Caco-2 (cell line): ENCODE measurements at regions of chr5 and their contacts with region 1.

Region 1: DNA sequence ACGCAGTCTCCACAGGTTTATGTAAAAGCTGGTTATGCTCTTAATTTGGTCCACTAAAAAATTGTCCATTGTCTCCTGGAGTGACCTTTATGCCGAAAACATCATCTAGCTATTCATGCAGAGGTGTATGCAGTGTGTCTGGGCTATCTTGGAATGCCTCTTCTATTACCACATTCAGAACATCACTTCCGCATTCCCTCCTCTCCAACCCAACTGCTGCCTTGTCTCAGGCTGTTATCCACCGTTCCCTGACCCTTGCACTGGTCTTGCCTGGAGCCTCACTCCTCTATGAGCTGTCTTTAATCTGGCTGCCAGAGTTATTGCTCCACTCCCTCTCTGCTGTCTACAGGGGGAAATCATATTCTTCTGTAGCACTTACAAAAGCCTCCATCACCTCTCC is 214.1 kb upstream of the ANKRD55 start:
- DNase-seq: peak; percentile 92 to 97
- H3K4me3 ChIP-seq: no peak overlapping the region
- H3K4me3 Mint-ChIP-seq: peak overlapping the region; percentile 28
- H3K27ac Mint-ChIP-seq: peak overlapping the region; percentile 81
- H3K4me1 ChIP-seq: peaks cover 52% of the 10 kb centered on the region
- H3K4me1 Mint-ChIP-seq: peaks cover 23% of the 10 kb centered on the region
- H3K27me3 ChIP-seq: no peaks in the 10 kb centered on the region
- H3K27me3 Mint-ChIP-seq: no peaks in the 10 kb centered on the region
- CTCF ChIP-seq: no peak

Region 2: GRCh38 chr5:56279979-56280378 is 167.3 kb before region 1 on chr5:
- CTCF ChIA-PET with region 1: no interaction called
- POLR2A ChIA-PET with region 1: no interaction called
- intact Hi-C with region 1: no loop called
- DNase-seq: peak in 1 of 2 experiments; percentile 34
- H3K4me3 ChIP-seq: no peak overlapping the region
- H3K4me3 Mint-ChIP-seq: no peak overlapping the region
- H3K27ac Mint-ChIP-seq: no peak overlapping the region
- H3K4me1 ChIP-seq: peaks cover 53% of the 10 kb centered on the region
- H3K4me1 Mint-ChIP-seq: peaks cover 18% of the 10 kb centered on the region
- H3K27me3 ChIP-seq: no peaks in the 10 kb centered on the region
- H3K27me3 Mint-ChIP-seq: no peaks in the 10 kb centered on the region
- CTCF ChIP-seq: no peak

Region 3: GRCh38 chr5:56310711-56311204 is 136.5 kb before region 1 on chr5:
- CTCF ChIA-PET with region 1: interaction called, 6 read pairs
- POLR2A ChIA-PET with region 1: no interaction called
- intact Hi-C with region 1: loop called (anchors 2 kb)
- DNase-seq: no peak
- H3K4me3 ChIP-seq: no peak overlapping the region
- H3K4me3 Mint-ChIP-seq: no peak overlapping the region
- H3K27ac Mint-ChIP-seq: peak overlapping the region; percentile 34
- H3K4me1 ChIP-seq: peaks cover 71% of the 10 kb centered on the region
- H3K4me1 Mint-ChIP-seq: peaks cover 55% of the 10 kb centered on the region
- H3K27me3 ChIP-seq: no peaks in the 10 kb centered on the region
- H3K27me3 Mint-ChIP-seq: no peaks in the 10 kb centered on the region
- CTCF ChIP-seq: no peak

Region 4: GRCh38 chr5:56415356-56415765 is 31.9 kb before region 1 on chr5:
- CTCF ChIA-PET with region 1: interaction called, 3 read pairs
- POLR2A ChIA-PET with region 1: no interaction called
- intact Hi-C with region 1: loop called (anchors 1 kb)
- DNase-seq: peak; percentile 82 to 90
- H3K4me3 ChIP-seq: no peak overlapping the region
- H3K4me3 Mint-ChIP-seq: peak overlapping the region; percentile 64
- H3K27ac Mint-ChIP-seq: peak overlapping the region; percentile 95
- H3K4me1 ChIP-seq: peaks cover 73% of the 10 kb centered on the region
- H3K4me1 Mint-ChIP-seq: peaks cover 45% of the 10 kb centered on the region
- H3K27me3 ChIP-seq: no peaks in the 10 kb centered on the region
- H3K27me3 Mint-ChIP-seq: no peaks in the 10 kb centered on the region
- CTCF ChIP-seq: no peak

Region 5: GRCh38 chr5:56475689-56476486 is 28.7 kb after region 1 on chr5:
- CTCF ChIA-PET with region 1: interaction called, 6 read pairs
- POLR2A ChIA-PET with region 1: interaction called, 8 read pairs
- intact Hi-C with region 1: loop called (anchors 1 kb)
- DNase-seq: no peak
- H3K4me3 ChIP-seq: no peak overlapping the region
- H3K4me3 Mint-ChIP-seq: peak overlapping the region; percentile 8
- H3K27ac Mint-ChIP-seq: peak overlapping the region; percentile 45
- H3K4me1 ChIP-seq: peaks cover 68% of the 10 kb centered on the region
- H3K4me1 Mint-ChIP-seq: peaks cover 36% of the 10 kb centered on the region
- H3K27me3 ChIP-seq: no peaks in the 10 kb centered on the region
- H3K27me3 Mint-ChIP-seq: no peaks in the 10 kb centered on the region
- CTCF ChIP-seq: no peak

Region 6: GRCh38 chr5:56481428-56482357 is 34.5 kb after region 1 on chr5:
- CTCF ChIA-PET with region 1: interaction called, 6 read pairs
- POLR2A ChIA-PET with region 1: interaction called, 8 read pairs
- intact Hi-C with region 1: loop called (anchors 1 kb)
- DNase-seq: peak; percentile 62 to 66
- H3K4me3 ChIP-seq: peak overlapping the region; percentile 56
- H3K4me3 Mint-ChIP-seq: peak overlapping the region; percentile 69
- H3K27ac Mint-ChIP-seq: peak overlapping the region; percentile 71
- H3K4me1 ChIP-seq: peaks cover 40% of the 10 kb centered on the region
- H3K4me1 Mint-ChIP-seq: peaks cover 24% of the 10 kb centered on the region
- H3K27me3 ChIP-seq: no peaks in the 10 kb centered on the region
- H3K27me3 Mint-ChIP-seq: no peaks in the 10 kb centered on the region
- CTCF ChIP-seq: peak in 1 of 2 experiments; percentile 55

Region 7: DNA sequence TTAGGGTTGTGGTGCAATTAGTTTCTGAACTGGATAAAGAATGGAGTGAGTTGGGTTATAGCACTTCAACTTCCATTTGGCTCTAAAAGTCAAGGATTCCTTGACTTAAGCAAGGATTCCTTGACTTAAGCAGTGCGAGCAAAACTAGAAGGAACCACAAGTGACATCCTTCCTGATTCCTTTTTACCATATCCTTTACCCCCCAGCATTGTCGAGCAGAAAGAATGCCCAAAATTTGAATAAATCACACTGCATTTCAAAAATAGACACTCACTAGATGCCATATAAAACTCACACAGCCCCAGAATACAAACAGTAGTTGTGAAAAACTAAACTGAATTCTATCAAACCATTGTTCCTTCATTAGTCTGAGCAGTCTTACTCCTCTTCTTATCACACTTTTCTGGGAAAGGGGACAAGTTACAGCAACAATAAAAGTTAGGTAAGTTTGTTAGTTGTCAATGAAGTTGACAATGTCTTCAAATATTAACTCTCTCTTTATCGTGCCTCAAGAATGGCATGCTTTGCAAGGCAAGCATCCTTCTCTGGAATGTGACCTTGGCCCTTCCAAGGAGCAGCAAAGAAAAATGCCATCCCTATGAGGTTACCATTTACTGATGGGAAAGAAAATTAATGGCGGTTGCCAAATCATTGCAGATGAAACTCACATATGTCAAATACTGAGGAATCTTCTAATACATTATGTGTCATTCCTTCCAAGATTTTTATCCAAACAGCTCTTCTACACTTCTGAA is 59.2 kb after region 1 on chr5:
- CTCF ChIA-PET with region 1: no interaction called
- POLR2A ChIA-PET with region 1: no interaction called
- intact Hi-C with region 1: loop called (anchors 1 kb)
- DNase-seq: peak; percentile 78 to 89
- H3K4me3 ChIP-seq: no peak overlapping the region
- H3K4me3 Mint-ChIP-seq: peak overlapping the region; percentile 4
- H3K27ac Mint-ChIP-seq: peak overlapping the region; percentile 35
- H3K4me1 ChIP-seq: peaks cover 69% of the 10 kb centered on the region
- H3K4me1 Mint-ChIP-seq: peaks cover 53% of the 10 kb centered on the region
- H3K27me3 ChIP-seq: no peaks in the 10 kb centered on the region
- H3K27me3 Mint-ChIP-seq: no peaks in the 10 kb centered on the region
- CTCF ChIP-seq: no peak

Region 8: GRCh38 chr5:56838409-56839039 is 391.3 kb after region 1 on chr5:
- CTCF ChIA-PET with region 1: interaction called, 4 read pairs
- POLR2A ChIA-PET with region 1: no interaction called
- intact Hi-C with region 1: loop called (anchors 2 kb)
- DNase-seq: peak in 1 of 2 experiments; percentile 39
- H3K4me3 ChIP-seq: no peak overlapping the region
- H3K4me3 Mint-ChIP-seq: no peak overlapping the region
- H3K27ac Mint-ChIP-seq: peak overlapping the region; percentile 22
- H3K4me1 ChIP-seq: peaks cover 43% of the 10 kb centered on the region
- H3K4me1 Mint-ChIP-seq: peaks cover 45% of the 10 kb centered on the region
- H3K27me3 ChIP-seq: no peaks in the 10 kb centered on the region
- H3K27me3 Mint-ChIP-seq: no peaks in the 10 kb centered on the region
- CTCF ChIP-seq: peak; percentile 36 to 53